ENCODE measurements at regions of chrX and their contacts with region 1.

Region 1: DNA sequence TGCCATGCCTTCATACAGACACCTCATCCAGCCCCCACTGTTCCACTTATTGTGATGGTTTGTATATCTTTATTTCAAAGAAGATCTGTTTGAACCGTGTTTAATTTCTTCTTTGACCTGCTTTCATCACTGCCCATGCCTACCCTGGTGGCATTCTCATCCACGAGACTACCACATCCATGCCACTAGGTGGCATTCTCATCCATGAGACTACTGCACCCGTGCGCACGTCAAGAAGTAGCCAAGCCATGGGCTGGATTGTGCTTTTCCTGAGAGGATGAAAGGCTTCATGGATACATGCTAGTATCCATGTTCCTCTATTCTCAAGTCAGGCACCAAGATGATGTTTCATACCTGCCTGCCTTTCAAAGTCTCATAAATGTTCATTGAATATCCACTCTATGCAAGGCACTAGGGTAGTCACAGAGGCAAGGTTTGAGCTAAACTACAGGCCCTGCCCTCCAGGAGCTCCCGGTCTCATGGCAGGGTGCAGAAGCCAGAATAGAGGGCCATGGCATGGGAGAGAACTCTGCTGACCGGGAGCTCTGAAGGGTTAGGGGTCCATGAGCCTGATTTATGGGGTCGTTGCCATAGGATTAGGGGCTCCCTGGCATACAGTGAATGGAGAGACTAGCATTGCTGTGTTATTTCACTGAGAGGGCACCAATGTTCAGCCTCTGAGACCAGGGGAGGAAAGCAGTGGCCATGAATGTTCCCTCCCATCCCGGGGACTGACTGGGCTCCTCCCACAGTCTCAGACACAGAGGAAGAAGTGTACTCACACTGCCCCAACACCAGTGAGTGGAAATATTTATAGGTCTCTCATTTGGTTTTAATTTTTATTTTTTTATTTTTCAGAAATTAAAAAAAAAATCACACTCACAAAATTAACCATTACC is 24.8 kb upstream of the EOLA2 start:
- DNase-seq: peak in 2 of 3 donors; percentile 3 to 5
- H3K4me3 ChIP-seq: no peak overlapping the region
- H3K4me3 Mint-ChIP-seq: no peak overlapping the region
- H3K27ac ChIP-seq: no peak overlapping the region
- H3K27ac Mint-ChIP-seq: peak overlapping the region in 1 of 7 donors; percentile 12
- H3K4me1 ChIP-seq: no peaks in the 10 kb centered on the region
- H3K4me1 Mint-ChIP-seq: no peaks in the 10 kb centered on the region
- H3K27me3 ChIP-seq: no peaks in the 10 kb centered on the region
- H3K27me3 Mint-ChIP-seq: peaks cover 0 to 2% (median 0%) of the 10 kb centered on the region in 3 donors
- CTCF ChIP-seq: peak; percentile 45

Region 2: DNA sequence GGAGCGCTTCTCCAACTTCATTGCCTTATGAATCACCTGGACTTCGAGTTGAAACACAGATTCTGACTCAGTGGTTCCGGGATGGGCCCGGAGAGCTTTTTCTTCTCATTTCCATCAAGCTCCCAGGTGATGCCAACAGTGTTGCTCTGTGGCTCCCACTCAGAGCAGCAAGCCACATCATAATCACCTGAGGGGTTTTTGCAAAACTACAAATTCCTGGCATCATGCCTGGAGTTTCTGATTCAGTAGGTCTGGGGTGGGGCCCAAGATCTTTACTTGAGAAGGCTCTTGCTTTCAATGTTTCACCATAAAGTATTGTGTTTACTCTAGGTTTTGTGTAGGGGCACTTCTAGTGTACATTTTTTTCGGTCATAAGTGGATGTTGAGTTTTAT is 612.3 kb after region 1 on chrX:
- intact Hi-C with region 1: loop called in 1 of 2 experiments (anchors 10 kb)
- DNase-seq: peak in 2 of 3 donors; percentile 4 to 10
- H3K4me3 ChIP-seq: peak overlapping the region in 1 of 3 experiments; percentile 55
- H3K4me3 Mint-ChIP-seq: peak overlapping the region; percentile 52 to 67
- H3K27ac ChIP-seq: peak overlapping the region; percentile 54 to 78
- H3K27ac Mint-ChIP-seq: peak overlapping the region; percentile 76 to 88 (median 86)
- H3K4me1 ChIP-seq: peaks cover 52% of the 10 kb centered on the region in 2 donors
- H3K4me1 Mint-ChIP-seq: peaks cover 72% of the 10 kb centered on the region
- H3K27me3 ChIP-seq: no peaks in the 10 kb centered on the region
- H3K27me3 Mint-ChIP-seq: peaks cover 0 to 7% (median 0%) of the 10 kb centered on the region in 3 donors
- CTCF ChIP-seq: no peak

Measured in CD14-positive monocyte (primary cell).